HEK293 (cell line): ENCODE measurements at regions of chr20 and their contacts with region 1.

Region 1: GRCh38 chr20:13744352-13744751 is 40.4 kb downstream of the ESF1 start:
- H3K4me3 ChIP-seq: no peak overlapping the region
- H3K27ac ChIP-seq: no peak overlapping the region
- H3K4me1 ChIP-seq: no peaks in the 10 kb centered on the region
- CTCF ChIP-seq: no peak

Region 2: DNA sequence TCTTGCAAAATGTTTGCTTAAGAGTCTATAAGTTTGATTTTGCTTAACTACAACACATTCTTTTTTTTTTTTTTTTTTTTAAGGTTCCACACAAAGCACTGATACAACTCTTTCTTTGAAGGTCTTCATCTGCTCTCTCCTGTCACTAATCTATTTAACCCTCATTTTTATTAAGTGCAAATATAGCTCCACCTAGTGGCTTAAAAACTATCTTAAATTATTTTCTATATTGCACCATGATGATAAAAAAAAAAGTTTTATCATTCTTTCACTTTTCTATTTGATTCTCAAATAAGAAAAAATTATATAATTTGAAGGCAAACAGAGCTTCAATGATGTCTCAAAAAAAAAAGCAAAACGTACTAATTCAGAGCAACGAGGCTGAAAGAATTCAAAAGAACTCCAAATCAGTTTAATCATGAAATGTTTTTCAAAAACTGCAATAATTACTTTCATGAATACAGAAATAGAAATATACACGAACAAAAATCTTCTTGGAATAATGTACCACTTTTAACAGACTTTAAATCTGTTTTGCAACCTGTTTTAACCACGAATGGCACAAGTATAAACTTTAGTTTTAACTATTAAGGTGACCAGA is 27.6 kb after region 1 on chr20:
- CTCF ChIA-PET with region 1: interaction called, 10 read pairs
- POLR2A ChIA-PET with region 1: no interaction called
- H3K4me3 ChIP-seq: no peak overlapping the region
- H3K27ac ChIP-seq: no peak overlapping the region
- H3K4me1 ChIP-seq: no peaks in the 10 kb centered on the region
- CTCF ChIP-seq: no peak